ENCODE measurements at regions of chr5 and their contacts with region 1.

Region 1: GRCh38 chr5:141320225-141321169 is at the start of gene TAF7:
- DNase-seq: peak; percentile 85 to 96 (median 91)
- ATAC-seq: peak; percentile 87
- H3K4me3 ChIP-seq: peak within 1 kb of the TSS; percentile 78
- H3K4me3 Mint-ChIP-seq: peak within 1 kb of the TSS; percentile 95
- H3K27ac ChIP-seq: peak within 1 kb of the TSS; percentile 93 to 99
- H3K27ac Mint-ChIP-seq: peak within 1 kb of the TSS; percentile 97
- H3K4me1 ChIP-seq: peaks cover 14% of the 10 kb centered on the region
- H3K4me1 Mint-ChIP-seq: peaks cover 37% of the 10 kb centered on the region
- H3K27me3 ChIP-seq: no peaks in the 10 kb centered on the region
- H3K27me3 Mint-ChIP-seq: no peaks in the 10 kb centered on the region
- CTCF ChIP-seq: peak; percentile 80
- total RNA-seq, gene TAF7: 80.5 TPM

Region 2: GRCh38 chr5:140468188-140468587 is 852.3 kb before region 1 on chr5:
- CTCF ChIA-PET with region 1: no interaction called
- POLR2A ChIA-PET with region 1: no interaction called
- intact Hi-C with region 1: no loop called
- DNase-seq: no peak
- ATAC-seq: no peak
- H3K4me3 ChIP-seq: no peak overlapping the region
- H3K4me3 Mint-ChIP-seq: no peak overlapping the region
- H3K27ac ChIP-seq: no peak overlapping the region
- H3K27ac Mint-ChIP-seq: no peak overlapping the region
- H3K4me1 ChIP-seq: no peaks in the 10 kb centered on the region
- H3K4me1 Mint-ChIP-seq: no peaks in the 10 kb centered on the region
- H3K27me3 ChIP-seq: no peaks in the 10 kb centered on the region
- H3K27me3 Mint-ChIP-seq: no peaks in the 10 kb centered on the region
- CTCF ChIP-seq: no peak

Region 3: GRCh38 chr5:141369994-141370848 is 49.7 kb after region 1 on chr5 and contains the start of gene PCDHGB3:
- CTCF ChIA-PET with region 1: interaction called, 11 read pairs
- POLR2A ChIA-PET with region 1: interaction called, 9 read pairs
- intact Hi-C with region 1: no loop called
- DNase-seq: peak in 9 of 14 experiments; percentile 4 to 61 (median 28)
- ATAC-seq: peak; percentile 83
- H3K4me3 ChIP-seq: peak within 1 kb of the TSS; percentile 36
- H3K4me3 Mint-ChIP-seq: peak within 1 kb of the TSS; percentile 80
- H3K27ac ChIP-seq: no peak within 1 kb of the TSS
- H3K27ac Mint-ChIP-seq: no peak within 1 kb of the TSS
- H3K4me1 ChIP-seq: peaks cover 8% of the 10 kb centered on the region
- H3K4me1 Mint-ChIP-seq: peaks cover 11% of the 10 kb centered on the region
- H3K27me3 ChIP-seq: peaks cover 71 to 76% of the 10 kb centered on the region in 2 experiments
- H3K27me3 Mint-ChIP-seq: peaks cover 91% of the 10 kb centered on the region
- CTCF ChIP-seq: no peak
- total RNA-seq, gene PCDHGB3: 0.11 to 0.28 TPM

Region 4: GRCh38 chr5:141412854-141413539 is 92.5 kb after region 1 on chr5 and contains the start of gene PCDHGA10:
- CTCF ChIA-PET with region 1: interaction called, 15 read pairs
- POLR2A ChIA-PET with region 1: interaction called, 5 read pairs
- intact Hi-C with region 1: loop called in 1 of 2 experiments (anchors 10 kb)
- DNase-seq: peak in 13 of 14 experiments; percentile 26 to 72 (median 39)
- ATAC-seq: peak; percentile 88
- H3K4me3 ChIP-seq: peak within 1 kb of the TSS; percentile 53
- H3K4me3 Mint-ChIP-seq: peak within 1 kb of the TSS; percentile 92
- H3K27ac ChIP-seq: no peak within 1 kb of the TSS
- H3K27ac Mint-ChIP-seq: no peak within 1 kb of the TSS
- H3K4me1 ChIP-seq: peaks cover 15% of the 10 kb centered on the region
- H3K4me1 Mint-ChIP-seq: peaks cover 24% of the 10 kb centered on the region
- H3K27me3 ChIP-seq: peaks cover 63 to 84% of the 10 kb centered on the region in 2 experiments
- H3K27me3 Mint-ChIP-seq: peaks cover 82% of the 10 kb centered on the region
- CTCF ChIP-seq: peak; percentile 71
- total RNA-seq, gene PCDHGA10: 0.08 TPM in 1 of 2 experiments, not detected in the other

Region 5: GRCh38 chr5:141512390-141512910 is 192.0 kb after region 1 on chr5:
- CTCF ChIA-PET with region 1: interaction called, 5 read pairs
- POLR2A ChIA-PET with region 1: interaction called, 26 read pairs
- intact Hi-C with region 1: no loop called
- DNase-seq: peak; percentile 70 to 91 (median 82)
- ATAC-seq: peak; percentile 51
- H3K4me3 ChIP-seq: peak overlapping the region; percentile 52
- H3K4me3 Mint-ChIP-seq: peak overlapping the region; percentile 95
- H3K27ac ChIP-seq: no peak overlapping the region
- H3K27ac Mint-ChIP-seq: peak overlapping the region; percentile 72
- H3K4me1 ChIP-seq: peaks cover 26% of the 10 kb centered on the region
- H3K4me1 Mint-ChIP-seq: peaks cover 25% of the 10 kb centered on the region
- H3K27me3 ChIP-seq: no peaks in the 10 kb centered on the region
- H3K27me3 Mint-ChIP-seq: peaks cover 4% of the 10 kb centered on the region
- CTCF ChIP-seq: peak; percentile 95

Region 6: GRCh38 chr5:141524604-141525597 is 204.4 kb after region 1 on chr5:
- CTCF ChIA-PET with region 1: interaction called, 5 read pairs
- POLR2A ChIA-PET with region 1: interaction called, 11 read pairs
- intact Hi-C with region 1: loop called in 1 of 2 experiments (anchors 1 kb)
- DNase-seq: peak; percentile 27 to 80 (median 39)
- ATAC-seq: peak; percentile 71
- H3K4me3 ChIP-seq: no peak overlapping the region
- H3K4me3 Mint-ChIP-seq: no peak overlapping the region
- H3K27ac ChIP-seq: no peak overlapping the region
- H3K27ac Mint-ChIP-seq: peak overlapping the region; percentile 13
- H3K4me1 ChIP-seq: peaks cover 13% of the 10 kb centered on the region
- H3K4me1 Mint-ChIP-seq: peaks cover 12% of the 10 kb centered on the region
- H3K27me3 ChIP-seq: no peaks in the 10 kb centered on the region
- H3K27me3 Mint-ChIP-seq: no peaks in the 10 kb centered on the region
- CTCF ChIP-seq: peak; percentile 99

Region 7: GRCh38 chr5:141849375-141850243 is 529.1 kb after region 1 on chr5:
- CTCF ChIA-PET with region 1: no interaction called
- POLR2A ChIA-PET with region 1: no interaction called
- intact Hi-C with region 1: loop called in 1 of 2 experiments (anchors 10 kb)
- DNase-seq: peak; percentile 51 to 86 (median 69)
- ATAC-seq: peak; percentile 77
- H3K4me3 ChIP-seq: peak overlapping the region; percentile 81
- H3K4me3 Mint-ChIP-seq: peak overlapping the region; percentile 90
- H3K27ac ChIP-seq: peak overlapping the region; percentile 64 to 71
- H3K27ac Mint-ChIP-seq: peak overlapping the region; percentile 80
- H3K4me1 ChIP-seq: peaks cover 14% of the 10 kb centered on the region
- H3K4me1 Mint-ChIP-seq: peaks cover 10% of the 10 kb centered on the region
- H3K27me3 ChIP-seq: no peaks in the 10 kb centered on the region
- H3K27me3 Mint-ChIP-seq: no peaks in the 10 kb centered on the region
- CTCF ChIP-seq: no peak

Region 8: DNA sequence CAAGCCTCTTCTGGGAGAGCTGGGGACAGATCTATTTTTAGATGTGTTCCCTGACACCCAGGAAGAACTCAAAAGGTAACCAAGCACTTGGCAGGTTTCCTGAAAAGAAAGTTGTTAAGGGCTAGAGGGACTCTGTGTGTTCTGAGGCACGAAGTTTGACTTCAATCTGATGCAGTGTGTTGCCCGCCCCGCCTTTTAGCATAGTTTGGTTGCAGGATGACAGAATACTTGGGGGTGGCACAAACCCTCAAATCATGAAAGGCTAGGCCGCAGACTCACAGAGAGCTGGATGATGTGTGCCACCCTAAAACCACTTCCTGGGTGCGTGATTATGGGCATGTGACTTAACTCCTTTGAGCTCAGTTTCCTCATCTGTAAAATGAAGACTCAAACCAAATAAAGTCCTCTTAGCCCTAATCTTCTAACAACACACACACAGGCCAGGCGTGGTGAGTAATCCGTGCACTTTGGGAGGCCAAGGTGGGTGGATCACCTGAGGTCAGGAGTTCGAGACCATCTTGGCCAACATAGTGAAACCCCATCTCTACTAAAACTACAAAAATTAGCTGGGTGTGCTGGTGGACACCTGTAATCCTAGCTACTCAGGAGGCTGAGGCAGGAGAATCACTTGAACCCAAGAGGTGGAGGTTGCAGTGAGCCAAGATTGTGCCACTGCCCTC is 775.3 kb after region 1 on chr5:
- CTCF ChIA-PET with region 1: no interaction called
- POLR2A ChIA-PET with region 1: no interaction called
- intact Hi-C with region 1: loop called in 1 of 2 experiments (anchors 10 kb)
- DNase-seq: peak; percentile 67 to 96 (median 76)
- ATAC-seq: peak; percentile 85
- H3K4me3 ChIP-seq: no peak overlapping the region
- H3K4me3 Mint-ChIP-seq: peak overlapping the region; percentile 28
- H3K27ac ChIP-seq: peak overlapping the region; percentile 71 to 75
- H3K27ac Mint-ChIP-seq: peak overlapping the region; percentile 94
- H3K4me1 ChIP-seq: peaks cover 61% of the 10 kb centered on the region
- H3K4me1 Mint-ChIP-seq: peaks cover 70% of the 10 kb centered on the region
- H3K27me3 ChIP-seq: no peaks in the 10 kb centered on the region
- H3K27me3 Mint-ChIP-seq: no peaks in the 10 kb centered on the region
- CTCF ChIP-seq: no peak